Activated CD8-positive, alpha-beta T cell treated with anti-CD3 and anti-CD28 coated beads, Interleukin-2, amount 10 ng/mL, durations not matched to agents 7 days and 5 days (primary cell): ENCODE measurements at regions of chr10 and their contacts with region 1.

Region 1: GRCh38 chr10:30591249-30591670 is 38.3 kb downstream of the LYZL2 start:
- DNase-seq: peak; percentile 51
- ATAC-seq: peak; percentile 57
- H3K4me3 Mint-ChIP-seq: no peak overlapping the region
- H3K27ac Mint-ChIP-seq: no peak overlapping the region
- H3K4me1 Mint-ChIP-seq: peaks cover 3% of the 10 kb centered on the region
- H3K27me3 Mint-ChIP-seq: peaks cover 25% of the 10 kb centered on the region

Region 2: DNA sequence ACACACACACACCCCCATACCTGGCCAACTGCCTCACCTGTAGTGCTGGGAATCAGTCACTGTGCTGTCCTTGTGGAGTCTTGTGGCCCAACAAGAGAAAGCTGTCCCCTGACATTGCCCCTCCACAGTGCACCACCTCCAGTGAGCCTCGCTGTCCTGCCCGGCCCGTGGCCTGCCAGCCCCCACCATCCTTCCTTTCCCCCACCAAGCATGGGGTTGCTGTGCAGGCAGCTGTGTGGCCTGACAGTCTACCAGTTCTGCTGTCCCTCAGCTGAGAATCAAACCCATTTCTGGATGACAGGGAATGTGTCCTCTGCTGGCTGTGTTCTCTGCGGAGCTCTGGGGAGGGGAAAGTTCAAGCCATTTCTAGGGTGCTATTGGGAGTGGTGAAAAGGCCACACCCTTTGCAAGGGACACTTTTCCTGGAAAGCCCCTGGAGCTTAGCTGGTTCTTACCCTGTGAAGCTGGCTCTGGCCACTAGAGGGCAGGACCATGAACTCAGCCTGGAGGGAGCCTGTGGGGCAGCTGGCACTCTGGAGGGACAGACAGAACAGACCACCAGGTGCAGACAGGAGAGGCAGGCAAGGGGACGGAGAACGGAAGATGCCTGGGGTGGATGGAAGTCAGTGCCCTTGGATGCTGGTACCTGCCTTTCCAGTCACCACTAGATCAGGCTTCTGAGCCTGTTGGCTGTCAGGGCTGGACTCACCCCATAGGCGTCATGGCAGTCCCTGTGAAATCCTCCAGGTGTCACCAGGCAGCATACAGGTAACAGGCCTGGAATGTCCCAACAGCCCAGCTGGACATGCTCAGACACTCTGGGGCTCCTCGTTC is 231.7 kb before region 1 on chr10:
- CTCF ChIA-PET with region 1: interaction called, 59 read pairs
- POLR2A ChIA-PET with region 1: no interaction called
- DNase-seq: peak; percentile 75
- ATAC-seq: peak; percentile 92
- H3K4me3 Mint-ChIP-seq: no peak overlapping the region
- H3K27ac Mint-ChIP-seq: no peak overlapping the region
- H3K4me1 Mint-ChIP-seq: peaks cover 7% of the 10 kb centered on the region
- H3K27me3 Mint-ChIP-seq: peaks cover 12% of the 10 kb centered on the region

Region 3: DNA sequence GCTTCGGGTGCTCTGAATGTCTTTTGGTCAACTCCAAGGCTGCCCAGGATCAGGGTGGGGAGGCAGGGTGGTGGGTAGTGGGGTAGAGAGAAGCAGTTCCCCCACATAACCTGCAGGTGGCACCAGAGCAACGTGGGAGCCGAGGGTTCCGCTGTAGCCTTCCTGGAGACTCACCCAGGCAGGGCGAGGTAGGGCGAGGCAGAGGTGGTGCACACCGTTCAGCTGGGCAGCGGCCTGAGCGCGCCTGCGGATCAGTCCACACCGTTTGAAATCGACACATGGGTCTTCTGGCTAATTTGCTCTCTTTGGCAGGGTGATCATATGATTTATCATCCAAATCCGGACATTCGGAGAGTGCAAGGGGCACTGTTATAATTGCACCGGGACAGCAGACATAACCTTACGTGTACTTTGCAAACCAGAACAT is 198.7 kb before region 1 on chr10:
- CTCF ChIA-PET with region 1: interaction called, 149 read pairs
- POLR2A ChIA-PET with region 1: no interaction called
- DNase-seq: peak; percentile 84
- ATAC-seq: peak; percentile 100
- H3K4me3 Mint-ChIP-seq: peak overlapping the region; percentile 35
- H3K27ac Mint-ChIP-seq: peak overlapping the region; percentile 54
- H3K4me1 Mint-ChIP-seq: peaks cover 16% of the 10 kb centered on the region
- H3K27me3 Mint-ChIP-seq: peaks cover 29% of the 10 kb centered on the region

Region 4: GRCh38 chr10:30433730-30434272 is 157.5 kb before region 1 on chr10 and contains the start of gene MAP3K8:
- CTCF ChIA-PET with region 1: interaction called, 13 read pairs
- POLR2A ChIA-PET with region 1: no interaction called
- DNase-seq: peak; percentile 85
- ATAC-seq: peak; percentile 80
- H3K4me3 Mint-ChIP-seq: peak within 1 kb of the TSS; percentile 92
- H3K27ac Mint-ChIP-seq: peak within 1 kb of the TSS; percentile 86
- H3K4me1 Mint-ChIP-seq: peaks cover 60% of the 10 kb centered on the region
- H3K27me3 Mint-ChIP-seq: no peaks in the 10 kb centered on the region
- total RNA-seq, gene MAP3K8: 26.0 to 27.7 TPM

Region 5: GRCh38 chr10:30562787-30563186 is 28.5 kb before region 1 on chr10:
- CTCF ChIA-PET with region 1: interaction called, 32 read pairs
- POLR2A ChIA-PET with region 1: no interaction called
- DNase-seq: peak; percentile 53
- ATAC-seq: peak; percentile 68
- H3K4me3 Mint-ChIP-seq: no peak overlapping the region
- H3K27ac Mint-ChIP-seq: no peak overlapping the region
- H3K4me1 Mint-ChIP-seq: peaks cover 10% of the 10 kb centered on the region
- H3K27me3 Mint-ChIP-seq: peaks cover 22% of the 10 kb centered on the region